A549 (cell line): ENCODE measurements at regions of chr15 and their contacts with region 1.

Region 1: GRCh38 chr15:51776952-51777574 is 25.7 kb downstream of the TMOD2 start:
- DNase-seq: peak; percentile 88
- ATAC-seq: peak; percentile 93 to 97
- H3K4me3 ChIP-seq: no peak overlapping the region
- H3K27ac ChIP-seq: no peak overlapping the region
- H3K4me1 ChIP-seq: peaks cover 13% of the 10 kb centered on the region; the same call in 2 of the 3 replicates
- CTCF ChIP-seq: peak; percentile 92
- EP300 ChIP-seq: no peak
- POLR2A ChIP-seq: no peak
- RAD21 ChIP-seq: peak; percentile 70 to 78

Region 2: GRCh38 chr15:51536965-51537574 is 240.0 kb before region 1 on chr15:
- CTCF ChIA-PET with region 1: interaction called, 20 read pairs
- POLR2A ChIA-PET with region 1: interaction called, 3 read pairs
- DNase-seq: peak; percentile 40 to 46
- ATAC-seq: peak; percentile 64 to 74; a peak in 4 of 6 replicates
- H3K4me3 ChIP-seq: no peak overlapping the region
- H3K27ac ChIP-seq: no peak overlapping the region
- H3K4me1 ChIP-seq: no peaks in the 10 kb centered on the region
- CTCF ChIP-seq: peak; percentile 74
- EP300 ChIP-seq: no peak
- POLR2A ChIP-seq: no peak
- RAD21 ChIP-seq: peak; percentile 47 to 52; a peak in 4 of 5 replicates

Region 3: DNA sequence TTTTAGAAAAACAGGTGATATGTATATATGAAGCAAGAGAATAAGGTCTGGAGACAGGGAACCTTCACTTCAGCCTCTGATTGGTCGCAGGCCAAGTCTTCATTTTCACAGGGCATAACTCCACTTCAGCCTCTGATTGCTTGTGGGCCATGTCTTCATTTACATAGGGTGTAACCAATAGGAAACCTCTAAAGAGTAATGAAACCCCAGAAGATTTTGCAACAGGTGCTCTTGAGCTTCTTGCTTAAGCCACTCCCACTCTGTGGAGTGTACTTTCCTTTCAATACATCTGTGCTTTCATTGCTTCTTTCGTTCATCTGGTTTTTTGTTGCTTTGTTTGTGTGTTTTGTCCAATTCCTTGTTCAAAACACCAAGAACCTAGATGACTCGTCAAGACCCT is 118.4 kb before region 1 on chr15:
- CTCF ChIA-PET with region 1: interaction called, 83 read pairs
- POLR2A ChIA-PET with region 1: no interaction called
- DNase-seq: no peak
- ATAC-seq: no peak
- H3K4me3 ChIP-seq: no peak overlapping the region
- H3K27ac ChIP-seq: no peak overlapping the region
- H3K4me1 ChIP-seq: no peaks in the 10 kb centered on the region
- CTCF ChIP-seq: no peak
- EP300 ChIP-seq: no peak
- POLR2A ChIP-seq: no peak
- RAD21 ChIP-seq: no peak

Region 4: DNA sequence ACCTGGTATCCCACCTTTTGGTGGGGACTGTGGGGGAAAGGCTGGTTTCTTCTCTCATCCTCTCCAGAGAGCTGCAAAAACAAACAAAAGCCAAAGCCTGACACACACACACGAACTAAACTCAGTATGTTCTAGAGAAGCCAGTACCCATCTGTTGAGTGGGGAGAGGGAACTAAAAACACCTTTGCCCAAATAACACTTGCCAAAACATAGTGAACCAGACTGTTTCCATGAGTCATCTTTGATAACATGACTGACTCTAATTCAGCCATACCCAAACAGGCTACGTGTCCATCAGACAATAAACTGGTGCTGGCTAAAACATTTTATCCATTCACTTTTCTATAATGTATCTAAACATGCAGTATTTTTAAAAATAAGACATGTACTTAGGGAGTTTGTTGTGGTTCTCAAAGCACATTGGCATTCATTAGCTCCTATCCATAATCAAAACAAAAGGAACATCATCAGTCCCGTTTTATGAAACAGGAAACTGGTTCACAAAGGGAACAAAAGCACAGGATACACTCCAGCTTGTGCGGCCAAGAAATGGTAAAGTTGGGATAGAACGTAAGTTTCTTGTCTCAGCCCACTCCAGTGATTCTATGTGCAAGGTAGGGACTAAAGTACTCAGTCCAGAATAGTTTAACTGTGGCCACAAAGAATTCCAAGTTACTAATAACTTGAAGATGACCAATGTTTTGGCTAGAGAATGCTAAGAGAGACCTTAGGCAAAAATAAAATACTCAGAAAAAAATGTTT is 55.7 kb before region 1 on chr15:
- CTCF ChIA-PET with region 1: interaction called, 22 read pairs
- POLR2A ChIA-PET with region 1: no interaction called
- DNase-seq: no peak
- ATAC-seq: no peak
- H3K4me3 ChIP-seq: no peak overlapping the region
- H3K27ac ChIP-seq: no peak overlapping the region
- H3K4me1 ChIP-seq: peaks cover 7% of the 10 kb centered on the region
- CTCF ChIP-seq: no peak
- EP300 ChIP-seq: no peak
- POLR2A ChIP-seq: no peak
- RAD21 ChIP-seq: no peak

Region 5: DNA sequence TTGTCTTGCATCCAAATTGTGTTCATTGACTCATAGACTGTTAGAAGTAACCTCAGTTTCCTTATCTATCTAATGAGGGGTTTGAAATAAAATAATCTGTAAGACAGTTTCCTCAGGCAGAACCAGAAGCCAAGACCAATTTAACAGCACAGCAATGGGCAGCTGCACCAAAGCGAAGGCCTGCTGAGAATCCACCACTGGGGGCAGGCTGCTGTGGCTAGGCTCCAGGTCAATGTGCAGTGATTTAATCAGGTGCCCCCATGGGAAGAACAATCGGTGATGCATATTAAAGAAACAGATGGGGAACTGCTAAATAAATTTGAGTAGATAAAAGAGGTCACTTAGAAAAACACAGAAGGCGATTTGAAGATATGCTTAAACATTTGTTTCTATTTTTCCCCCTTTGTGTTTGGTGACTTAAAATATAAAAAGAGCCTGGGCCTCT is 24.4 kb after region 1 on chr15:
- CTCF ChIA-PET with region 1: interaction called, 25 read pairs
- POLR2A ChIA-PET with region 1: no interaction called
- DNase-seq: peak; percentile 62 to 69
- ATAC-seq: peak; percentile 77 to 90; a peak in 5 of 6 replicates
- H3K4me3 ChIP-seq: no peak overlapping the region
- H3K27ac ChIP-seq: peak overlapping the region in 1 of 2 experiments; percentile 30; a peak in 1 of 6 replicates
- H3K4me1 ChIP-seq: peaks cover 46% of the 10 kb centered on the region
- CTCF ChIP-seq: peak; percentile 62
- EP300 ChIP-seq: no peak
- POLR2A ChIP-seq: no peak
- RAD21 ChIP-seq: peak; percentile 33 to 49; a peak in 3 of 5 replicates

Region 6: DNA sequence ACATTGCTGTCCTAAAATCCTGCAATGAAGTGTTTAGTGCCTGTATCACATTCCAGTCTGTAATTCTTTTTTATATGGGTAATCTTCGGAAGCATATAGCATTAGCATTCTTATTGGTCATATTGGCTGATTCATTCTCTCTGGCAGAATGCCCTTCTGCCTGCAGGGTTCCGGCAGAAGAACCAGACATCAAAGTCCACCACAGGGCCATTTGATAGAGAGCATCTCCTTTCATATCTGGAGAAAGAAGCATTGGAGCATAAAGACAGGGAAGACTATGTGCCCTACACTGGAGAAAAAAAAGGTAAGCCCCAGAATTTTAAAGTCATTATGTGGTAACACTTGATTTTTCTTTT is 92.0 kb after region 1 on chr15:
- CTCF ChIA-PET with region 1: interaction called, 17 read pairs
- POLR2A ChIA-PET with region 1: no interaction called
- DNase-seq: peak; percentile 70 to 95
- ATAC-seq: peak; percentile 78 to 87
- H3K4me3 ChIP-seq: peak overlapping the region; percentile 32
- H3K27ac ChIP-seq: peak overlapping the region; percentile 89
- H3K4me1 ChIP-seq: peaks cover 76% of the 10 kb centered on the region
- CTCF ChIP-seq: no peak
- EP300 ChIP-seq: peak; percentile 59 to 82; a peak in 3 of 5 replicates
- POLR2A ChIP-seq: no peak
- RAD21 ChIP-seq: peak in 1 of 2 experiments; percentile 25; a peak in 2 of 5 replicates

Region 7: GRCh38 chr15:52071546-52071945 is 294.5 kb after region 1 on chr15:
- CTCF ChIA-PET with region 1: no interaction called
- POLR2A ChIA-PET with region 1: no interaction called
- DNase-seq: no peak
- ATAC-seq: no peak
- H3K4me3 ChIP-seq: no peak overlapping the region
- H3K27ac ChIP-seq: peak overlapping the region in 1 of 2 experiments; percentile 9; a peak in 1 of 6 replicates
- H3K4me1 ChIP-seq: peaks cover 17% of the 10 kb centered on the region
- CTCF ChIP-seq: no peak
- EP300 ChIP-seq: no peak
- POLR2A ChIP-seq: no peak
- RAD21 ChIP-seq: no peak

Region 8: GRCh38 chr15:52171386-52171785 is 394.3 kb after region 1 on chr15:
- CTCF ChIA-PET with region 1: no interaction called
- POLR2A ChIA-PET with region 1: no interaction called
- DNase-seq: no peak
- ATAC-seq: peak; percentile 64 to 65; a peak in 5 of 6 replicates
- H3K4me3 ChIP-seq: no peak overlapping the region
- H3K27ac ChIP-seq: no peak overlapping the region
- H3K4me1 ChIP-seq: no peaks in the 10 kb centered on the region
- CTCF ChIP-seq: no peak
- EP300 ChIP-seq: no peak
- POLR2A ChIP-seq: no peak
- RAD21 ChIP-seq: no peak